Psoas muscle (tissue), 8 donors: ENCODE measurements at regions of chr22 and their contacts with region 1.

Region 1: DNA sequence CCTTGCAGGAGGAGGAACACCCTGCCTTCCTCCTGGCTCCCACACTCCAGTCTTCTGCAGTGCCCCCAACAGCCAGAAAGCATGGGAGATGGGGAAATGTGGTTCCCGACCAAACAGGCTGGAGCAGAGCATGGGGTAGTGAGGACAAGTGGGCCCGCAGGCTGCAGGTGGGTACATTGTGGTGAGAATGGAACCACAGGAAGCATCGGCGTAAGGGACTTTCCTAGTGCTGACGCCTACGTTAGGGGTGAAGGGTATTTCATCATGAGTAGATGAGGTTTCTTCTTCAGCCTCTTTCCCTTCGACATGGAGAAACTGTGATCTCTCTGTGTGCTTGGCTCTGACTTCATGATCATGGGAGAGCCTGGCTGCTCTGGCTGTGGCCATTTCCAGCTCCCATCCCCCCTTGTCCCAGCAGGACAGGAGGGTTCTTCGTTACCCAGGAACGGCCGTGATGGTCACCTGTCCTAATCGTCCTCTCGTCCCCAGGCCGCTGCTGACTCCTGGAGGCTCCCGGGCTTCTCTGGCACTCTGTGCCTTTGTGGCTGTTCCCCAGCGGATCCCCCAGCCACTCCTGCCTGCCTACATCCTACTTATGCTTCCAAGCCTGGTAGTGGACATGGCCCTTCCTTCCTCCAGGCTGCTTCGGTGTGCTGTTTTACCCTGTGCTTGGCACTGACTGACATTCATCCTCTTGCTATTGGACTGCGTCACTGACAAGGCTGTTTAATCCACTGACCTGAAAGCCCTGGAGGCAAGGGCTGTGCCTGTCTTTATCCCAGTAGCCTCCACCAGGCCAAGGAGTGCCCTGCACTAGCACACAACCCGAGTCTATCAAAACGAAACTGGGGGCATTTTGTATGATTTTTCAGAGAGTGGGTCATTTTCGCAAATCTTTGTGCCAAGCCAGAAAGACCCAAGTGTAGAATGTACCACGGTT is 65.2 kb upstream of the CECR2 start:
- DNase-seq: no peak
- ATAC-seq: peak; percentile 78 to 86 (median 81)
- H3K4me3 ChIP-seq: no peak overlapping the region
- H3K27ac ChIP-seq: peak overlapping the region; percentile 54
- H3K4me1 ChIP-seq: peaks cover 10% of the 10 kb centered on the region
- H3K27me3 ChIP-seq: no peaks in the 10 kb centered on the region
- CTCF ChIP-seq: no peak

Region 2: DNA sequence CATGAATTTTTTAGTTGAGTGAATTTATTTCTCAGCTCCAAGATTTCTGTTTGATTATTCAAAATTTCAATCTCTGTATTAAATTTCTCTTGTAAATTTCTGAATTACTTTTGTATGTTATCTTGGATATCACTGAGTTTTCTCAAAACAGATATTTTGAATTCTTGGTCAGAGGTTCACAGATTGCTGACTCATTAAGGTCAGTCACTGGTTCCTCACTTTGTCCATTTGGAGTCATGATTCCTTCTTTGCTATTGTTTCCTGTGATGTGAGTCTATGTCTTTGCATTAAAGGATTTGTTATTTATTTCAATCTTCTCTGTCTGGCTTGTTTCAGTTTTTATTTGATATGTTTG is 229.5 kb before region 1 on chr22:
- intact Hi-C with region 1: no loop called
- DNase-seq: no peak
- ATAC-seq: peak in 2 of 4 donors; percentile 16 to 22
- H3K4me3 ChIP-seq: no peak overlapping the region
- H3K27ac ChIP-seq: no peak overlapping the region
- H3K4me1 ChIP-seq: no peaks in the 10 kb centered on the region
- H3K27me3 ChIP-seq: no peaks in the 10 kb centered on the region
- CTCF ChIP-seq: no peak

Region 3: GRCh38 chr22:17258015-17258787 is 45.9 kb before region 1 on chr22:
- intact Hi-C with region 1: no loop called
- DNase-seq: peak; percentile 59 to 88
- ATAC-seq: peak; percentile 89 to 96 (median 94)
- H3K4me3 ChIP-seq: peak overlapping the region; percentile 50
- H3K27ac ChIP-seq: peak overlapping the region; percentile 97
- H3K4me1 ChIP-seq: peaks cover 32% of the 10 kb centered on the region
- H3K27me3 ChIP-seq: no peaks in the 10 kb centered on the region
- CTCF ChIP-seq: no peak

Region 4: GRCh38 chr22:17283423-17283822 is 20.7 kb before region 1 on chr22:
- intact Hi-C with region 1: loop called in 1 of 2 experiments (anchors 1 kb)
- DNase-seq: no peak
- ATAC-seq: no peak
- H3K4me3 ChIP-seq: no peak overlapping the region
- H3K27ac ChIP-seq: no peak overlapping the region
- H3K4me1 ChIP-seq: no peaks in the 10 kb centered on the region
- H3K27me3 ChIP-seq: no peaks in the 10 kb centered on the region
- CTCF ChIP-seq: no peak

Region 5: GRCh38 chr22:17562906-17563870 is 259.1 kb after region 1 on chr22 and contains the start of gene SLC25A18:
- intact Hi-C with region 1: no loop called
- DNase-seq: peak; percentile 78 to 91
- ATAC-seq: peak; percentile 86 to 96 (median 88)
- H3K4me3 ChIP-seq: peak within 1 kb of the TSS; percentile 9
- H3K27ac ChIP-seq: peak within 1 kb of the TSS; percentile 81
- H3K4me1 ChIP-seq: peaks cover 24% of the 10 kb centered on the region
- H3K27me3 ChIP-seq: no peaks in the 10 kb centered on the region
- CTCF ChIP-seq: peak; percentile 10
- total RNA-seq, gene SLC25A18: 0.56 to 10.4 (median 5.0) TPM